ENCODE measurements at regions of chr20 and their contacts with region 1.

Region 1: GRCh38 chr20:63381807-63382322 is 20.7 kb upstream of the CHRNA4 start:
- DNase-seq: peak; percentile 68
- H3K27ac ChIP-seq: no peak overlapping the region
- CTCF ChIP-seq: peak; percentile 97

Region 2: DNA sequence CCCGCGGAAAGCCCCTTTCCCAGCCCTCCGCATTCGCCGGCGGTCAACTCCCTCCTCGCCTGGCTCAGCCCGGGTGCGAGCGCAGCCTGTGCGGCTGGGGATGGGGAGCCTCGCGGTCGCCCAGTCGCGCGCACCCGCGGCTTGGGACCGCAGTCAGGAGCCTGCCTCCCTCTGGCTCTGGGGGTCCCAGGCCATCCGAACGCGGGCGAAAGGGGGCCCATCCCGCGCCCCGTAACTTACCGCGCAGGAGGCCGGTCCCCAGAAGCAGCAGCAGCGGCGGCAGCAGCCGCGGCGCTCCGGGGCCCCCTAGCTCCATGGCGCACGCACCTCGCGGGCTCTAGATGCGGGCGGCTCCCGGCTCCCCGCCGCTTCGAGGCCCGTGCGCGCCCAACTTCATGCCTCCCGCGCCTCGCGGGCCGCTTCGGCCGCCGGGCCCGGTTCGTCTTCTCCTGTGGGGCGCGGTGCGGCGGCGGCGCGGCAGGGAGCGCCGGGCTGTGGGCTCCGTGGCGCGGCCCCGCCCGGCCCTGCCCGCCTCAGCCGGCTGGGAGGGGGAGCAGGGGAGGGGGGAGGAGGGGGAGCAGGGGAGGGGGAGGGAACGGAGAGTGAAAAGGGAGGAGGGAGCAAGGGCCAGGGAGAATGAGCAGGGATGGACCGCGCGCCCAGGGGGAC is 20.9 kb before region 1 on chr20 and contains the start of gene CHRNA4:
- CTCF ChIA-PET with region 1: interaction called, 14 read pairs
- POLR2A ChIA-PET with region 1: no interaction called
- DNase-seq: peak; percentile 37
- H3K27ac ChIP-seq: no peak within 1 kb of the TSS
- CTCF ChIP-seq: no peak

Measured in RWPE1 (cell line).